ENCODE measurements at regions of chr4 and their contacts with region 1.

Region 1: DNA sequence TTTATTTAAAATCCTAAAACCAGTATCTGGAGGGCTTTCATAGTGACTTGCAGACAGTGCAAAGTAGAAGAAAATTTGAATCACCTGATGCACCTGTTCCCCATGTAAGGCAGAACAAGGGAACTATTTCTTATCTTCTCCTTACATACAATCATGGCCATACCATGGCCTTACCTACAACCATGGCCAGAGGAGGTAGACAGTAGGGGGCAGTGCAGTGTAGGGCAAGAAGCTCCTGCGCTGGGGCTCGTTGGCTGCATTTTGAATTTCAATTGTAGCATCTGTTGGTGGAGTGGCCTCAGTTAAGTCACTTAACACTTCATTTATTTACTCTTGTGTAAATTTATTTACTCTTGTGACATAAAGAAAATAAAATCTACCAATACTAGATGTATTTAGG is 33.0 kb downstream of the GALNTL6 start:
- DNase-seq: peak; percentile 11
- H3K4me3 ChIP-seq: no peak overlapping the region
- H3K27ac ChIP-seq: no peak overlapping the region
- H3K4me1 ChIP-seq: no peaks in the 10 kb centered on the region
- H3K27me3 ChIP-seq: no peaks in the 10 kb centered on the region
- CTCF ChIP-seq: peak; percentile 66 to 86

Region 2: GRCh38 chr4:172035562-172035961 is 189.3 kb after region 1 on chr4:
- CTCF ChIA-PET with region 1: no interaction called
- dilution Hi-C with region 1: no loop called
- in situ Hi-C with region 1: no loop called
- intact Hi-C with region 1: loop called (anchors 1 kb)
- DNase-seq: no peak
- H3K4me3 ChIP-seq: no peak overlapping the region
- H3K27ac ChIP-seq: no peak overlapping the region
- H3K4me1 ChIP-seq: no peaks in the 10 kb centered on the region
- H3K27me3 ChIP-seq: no peaks in the 10 kb centered on the region
- CTCF ChIP-seq: no peak

Region 3: GRCh38 chr4:172073590-172073989 is 227.4 kb after region 1 on chr4:
- CTCF ChIA-PET with region 1: no interaction called
- dilution Hi-C with region 1: no loop called
- in situ Hi-C with region 1: no loop called
- intact Hi-C with region 1: no loop called
- DNase-seq: no peak
- H3K4me3 ChIP-seq: no peak overlapping the region
- H3K27ac ChIP-seq: no peak overlapping the region
- H3K4me1 ChIP-seq: no peaks in the 10 kb centered on the region
- H3K27me3 ChIP-seq: no peaks in the 10 kb centered on the region
- CTCF ChIP-seq: no peak

Region 4: GRCh38 chr4:172109466-172109865 is 263.2 kb after region 1 on chr4:
- CTCF ChIA-PET with region 1: no interaction called
- dilution Hi-C with region 1: no loop called
- in situ Hi-C with region 1: no loop called
- intact Hi-C with region 1: no loop called
- DNase-seq: no peak
- H3K4me3 ChIP-seq: no peak overlapping the region
- H3K27ac ChIP-seq: no peak overlapping the region
- H3K4me1 ChIP-seq: no peaks in the 10 kb centered on the region
- H3K27me3 ChIP-seq: no peaks in the 10 kb centered on the region
- CTCF ChIP-seq: no peak

Region 5: GRCh38 chr4:172202480-172203076 is 356.3 kb after region 1 on chr4:
- CTCF ChIA-PET with region 1: no interaction called
- dilution Hi-C with region 1: no loop called
- in situ Hi-C with region 1: no loop called
- intact Hi-C with region 1: loop called (anchors 1 kb)
- DNase-seq: no peak
- H3K4me3 ChIP-seq: no peak overlapping the region
- H3K27ac ChIP-seq: no peak overlapping the region
- H3K4me1 ChIP-seq: no peaks in the 10 kb centered on the region
- H3K27me3 ChIP-seq: no peaks in the 10 kb centered on the region
- CTCF ChIP-seq: peak; percentile 62 to 75

Measured in mammary epithelial cell (primary cell).